ENCODE measurements at regions of chr6 and their contacts with region 1.

Region 1: GRCh38 chr6:30914076-30914853 is at the start of gene VARS2:
- DNase-seq: peak; percentile 94 to 96
- H3K4me3 ChIP-seq: peak within 1 kb of the TSS; percentile 51 to 77 (median 66)
- H3K27ac ChIP-seq: peak within 1 kb of the TSS; percentile 93 to 96
- H3K4me1 ChIP-seq: peaks cover 3 to 12% of the 10 kb centered on the region in 2 donors
- H3K27me3 ChIP-seq: no peaks in the 10 kb centered on the region
- CTCF ChIP-seq: peak in 1 of 3 donors; percentile 33
- POLR2A ChIP-seq: peak; percentile 83
- total RNA-seq, gene VARS2: 15.7 to 19.2 (median 16.8) TPM

Region 2: GRCh38 chr6:31079656-31080261 is 165.5 kb after region 1 on chr6:
- intact Hi-C with region 1: loop called (anchors 10 kb)
- DNase-seq: peak; percentile 50 to 60
- H3K4me3 ChIP-seq: peak overlapping the region in 2 of 3 donors; percentile 33 to 55
- H3K27ac ChIP-seq: no peak overlapping the region
- H3K4me1 ChIP-seq: no peaks in the 10 kb centered on the region
- H3K27me3 ChIP-seq: no peaks in the 10 kb centered on the region
- CTCF ChIP-seq: peak; percentile 58 to 75 (median 71)
- POLR2A ChIP-seq: no peak